Cardiac septum (tissue), 1 donor: ENCODE measurements at regions of chr9 and their contacts with region 1.

Region 1: DNA sequence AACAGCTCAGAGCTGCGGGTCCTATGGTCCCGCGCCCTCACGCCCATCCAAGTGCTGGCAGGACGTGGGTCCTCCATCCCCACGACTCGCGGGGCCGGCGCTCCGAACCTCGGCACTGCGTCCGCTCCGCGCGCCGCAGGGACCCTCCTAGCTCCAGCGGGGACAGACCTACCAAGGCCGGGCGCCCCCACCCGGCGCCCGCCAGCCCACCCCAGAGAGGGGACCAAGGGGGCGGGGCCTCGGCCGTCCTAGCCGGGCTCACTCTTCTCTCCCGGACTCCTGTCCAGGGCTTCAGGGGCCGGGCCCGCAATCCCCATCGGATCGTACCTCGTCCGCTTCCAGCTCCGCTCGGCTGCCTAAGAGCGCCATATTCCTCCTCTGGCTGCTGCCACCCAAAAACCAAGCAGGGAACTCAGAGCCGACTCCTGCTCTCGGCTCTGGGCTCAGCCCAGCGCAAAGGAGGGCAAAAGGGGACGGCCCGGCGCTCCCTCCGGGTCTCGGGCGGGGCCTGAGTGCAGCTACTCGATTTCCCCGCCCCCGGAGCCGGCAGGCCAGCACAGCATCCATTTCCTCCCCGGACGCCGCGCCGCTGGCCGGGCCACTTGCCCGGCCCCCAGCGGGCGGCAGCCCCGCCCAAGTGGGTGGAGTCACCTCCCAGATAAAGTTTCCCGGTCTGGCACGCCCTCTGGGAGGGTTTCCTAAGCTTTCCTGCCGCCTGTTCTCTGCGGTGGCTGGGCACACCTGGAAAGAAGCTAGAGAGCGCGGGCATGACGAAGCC is at the start of gene TTC39B:
- DNase-seq: peak; percentile 95
- total RNA-seq, gene TTC39B: 3.2 TPM

Region 2: DNA sequence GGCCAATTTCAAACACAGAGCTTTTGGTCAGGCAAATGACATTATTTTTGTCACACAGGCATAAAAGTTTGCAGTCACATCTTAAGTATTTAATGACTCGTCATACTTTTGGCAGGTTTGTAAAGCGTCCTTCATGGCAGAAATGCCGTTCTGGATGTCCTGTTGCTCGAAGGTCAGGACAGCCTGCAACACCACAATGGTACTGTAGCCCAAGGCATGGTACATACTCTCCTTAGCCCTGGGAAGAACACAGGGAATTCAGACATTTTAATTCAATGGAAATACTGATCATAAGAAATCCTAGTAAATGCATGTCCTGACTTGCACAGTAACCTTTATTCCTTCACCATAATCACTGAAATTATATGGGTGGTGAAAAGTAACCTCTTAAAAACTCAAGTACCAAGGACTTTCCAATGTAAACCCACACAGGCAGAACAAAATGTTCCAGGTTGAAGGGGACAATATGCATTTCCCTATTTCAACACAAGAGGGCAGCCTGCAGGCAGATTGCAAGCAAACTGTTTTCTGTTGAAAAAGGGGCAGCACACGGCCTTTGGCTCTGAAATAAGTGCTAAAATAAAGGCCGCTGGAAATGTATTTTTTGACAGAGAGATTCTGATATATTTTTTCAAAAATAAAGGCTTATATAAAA is 95.7 kb before region 1 on chr9:
- intact Hi-C with region 1: loop called (anchors 10 kb)
- DNase-seq: no peak

Region 3: DNA sequence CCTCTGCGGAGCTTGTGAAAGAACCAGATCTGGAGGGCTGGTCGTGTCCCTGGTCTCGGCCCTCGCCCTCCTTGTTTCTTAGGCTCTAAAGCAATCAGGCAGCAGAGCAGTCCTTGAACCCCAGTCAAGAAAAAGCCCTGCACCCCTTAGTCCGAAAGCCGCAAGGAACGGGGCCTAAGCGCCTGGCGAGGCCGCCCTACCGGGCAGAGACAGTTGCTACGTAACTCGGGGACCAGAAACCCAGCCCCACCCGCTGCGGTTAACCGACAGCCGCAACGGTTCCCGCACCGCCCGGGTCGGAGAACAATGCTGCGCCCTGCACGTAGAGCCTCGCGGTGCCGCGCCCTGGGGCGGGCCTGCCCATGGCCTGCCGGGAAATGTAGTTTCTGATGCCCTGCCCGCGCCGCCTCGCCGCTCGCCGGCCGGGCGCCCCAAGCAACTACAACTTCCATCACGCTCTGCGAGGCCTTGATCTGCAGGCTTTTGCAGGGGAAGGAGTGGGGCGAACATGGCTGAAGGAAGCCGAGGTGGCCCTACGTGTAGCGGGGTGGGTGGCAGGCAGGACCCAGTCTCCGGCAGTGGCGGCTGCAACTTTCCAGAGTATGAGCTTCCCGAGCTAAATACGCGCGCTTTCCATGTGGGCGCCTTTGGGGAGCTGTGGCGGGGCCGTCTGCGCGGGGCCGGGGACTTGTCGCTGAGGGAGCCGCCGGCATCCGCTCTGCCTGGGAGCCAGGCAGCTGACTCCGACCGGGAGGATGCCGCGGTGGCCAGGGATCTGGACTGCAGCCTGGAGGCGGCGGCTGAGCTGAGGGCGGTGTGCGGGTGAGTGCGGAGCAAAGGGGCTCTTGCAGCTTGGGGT is 115.7 kb after region 1 on chr9 and contains the start of gene SNAPC3:
- intact Hi-C with region 1: loop called (anchors 5 kb)
- DNase-seq: peak; percentile 98
- total RNA-seq, gene SNAPC3: 31.5 TPM

Region 4: GRCh38 chr9:15510789-15511575 is 204.0 kb after region 1 on chr9 and contains the start of gene PSIP1:
- intact Hi-C with region 1: loop called (anchors 2 kb)
- DNase-seq: peak; percentile 91
- total RNA-seq, gene PSIP1: 21.2 TPM

Region 5: GRCh38 chr9:15552636-15553527 is 245.9 kb after region 1 on chr9 and contains the start of gene CCDC171:
- intact Hi-C with region 1: loop called (anchors 5 kb)
- DNase-seq: peak; percentile 95
- total RNA-seq, gene CCDC171: 2.5 TPM